Prostate gland (tissue), 2 donors: ENCODE measurements at regions of chr6 and their contacts with region 1.

Region 1: GRCh38 chr6:85354761-85355618 is 94.9 kb upstream of the NT5E start:
- DNase-seq: peak; percentile 61
- H3K4me3 ChIP-seq: no peak overlapping the region
- H3K27ac ChIP-seq: no peak overlapping the region
- H3K4me1 ChIP-seq: no peaks in the 10 kb centered on the region
- H3K27me3 ChIP-seq: no peaks in the 10 kb centered on the region
- CTCF ChIP-seq: peak; percentile 85 to 92 (median 91)
- POLR2A ChIP-seq: no peak

Region 2: DNA sequence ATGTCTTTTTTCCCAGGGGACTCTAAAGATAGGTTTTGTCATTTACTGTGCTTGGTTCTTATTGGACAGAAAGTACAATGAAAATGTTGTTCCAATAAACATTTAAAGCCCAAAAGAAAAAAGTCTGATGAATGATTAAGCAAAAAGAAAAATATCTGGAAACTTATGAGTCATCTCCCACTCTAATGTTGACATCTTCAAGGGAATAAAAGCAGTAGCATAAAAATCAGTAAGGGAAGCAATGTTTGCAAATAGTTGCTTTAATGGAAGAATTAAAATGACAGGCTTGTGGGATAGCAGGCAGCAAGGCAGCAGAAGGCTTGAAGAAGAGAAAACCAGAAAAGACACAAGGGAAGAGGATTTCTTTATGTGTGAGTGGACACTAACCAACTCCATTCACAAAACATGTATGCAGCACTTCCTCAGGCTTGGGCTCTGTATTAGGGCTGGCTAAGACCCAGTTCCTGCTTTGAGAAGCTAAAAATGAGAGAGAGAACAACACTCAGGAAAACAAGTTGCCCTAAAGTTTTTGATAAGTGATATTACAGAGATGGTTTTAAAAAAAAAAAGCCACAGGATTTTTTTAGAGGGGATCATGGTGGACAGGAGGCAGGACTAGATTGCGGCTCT is 168.3 kb before region 1 on chr6:
- intact Hi-C with region 1: no loop called
- DNase-seq: no peak
- H3K4me3 ChIP-seq: no peak overlapping the region
- H3K27ac ChIP-seq: no peak overlapping the region
- H3K4me1 ChIP-seq: no peaks in the 10 kb centered on the region
- H3K27me3 ChIP-seq: no peaks in the 10 kb centered on the region
- CTCF ChIP-seq: no peak
- POLR2A ChIP-seq: no peak

Region 3: GRCh38 chr6:85482905-85483700 is 128.1 kb after region 1 on chr6:
- intact Hi-C with region 1: loop called (anchors 2 kb)
- DNase-seq: peak; percentile 65
- H3K4me3 ChIP-seq: no peak overlapping the region
- H3K27ac ChIP-seq: no peak overlapping the region
- H3K4me1 ChIP-seq: no peaks in the 10 kb centered on the region
- H3K27me3 ChIP-seq: no peaks in the 10 kb centered on the region
- CTCF ChIP-seq: peak; percentile 96 to 99 (median 98)
- POLR2A ChIP-seq: no peak

Region 4: GRCh38 chr6:85537055-85537494 is 182.1 kb after region 1 on chr6:
- intact Hi-C with region 1: loop called (anchors 10 kb)
- DNase-seq: no peak
- H3K4me3 ChIP-seq: no peak overlapping the region
- H3K27ac ChIP-seq: no peak overlapping the region
- H3K4me1 ChIP-seq: no peaks in the 10 kb centered on the region
- H3K27me3 ChIP-seq: no peaks in the 10 kb centered on the region
- CTCF ChIP-seq: peak; percentile 34 to 56 (median 44)
- POLR2A ChIP-seq: no peak